ENCODE measurements at regions of chr2 and their contacts with region 1.

Region 1: GRCh38 chr2:55519938-55520885 is 694 bp downstream of the CFAP36 start:
- DNase-seq: peak in 4 of 9 donors; percentile 23 to 58 (median 26)
- ATAC-seq: peak; percentile 31
- H3K4me3 ChIP-seq: peak overlapping the region; percentile 80
- H3K4me3 Mint-ChIP-seq: peak overlapping the region; percentile 89 to 99 (median 98)
- H3K27ac ChIP-seq: peak overlapping the region; percentile 90
- H3K27ac Mint-ChIP-seq: peak overlapping the region; percentile 96 to 100 (median 100)
- H3K4me1 ChIP-seq: peaks cover 0 to 5% of the 10 kb centered on the region in 2 donors
- H3K4me1 Mint-ChIP-seq: peaks cover 5 to 28% (median 16%) of the 10 kb centered on the region in 7 donors
- H3K27me3 ChIP-seq: no peaks in the 10 kb centered on the region
- H3K27me3 Mint-ChIP-seq: no peaks in the 10 kb centered on the region

Region 2: DNA sequence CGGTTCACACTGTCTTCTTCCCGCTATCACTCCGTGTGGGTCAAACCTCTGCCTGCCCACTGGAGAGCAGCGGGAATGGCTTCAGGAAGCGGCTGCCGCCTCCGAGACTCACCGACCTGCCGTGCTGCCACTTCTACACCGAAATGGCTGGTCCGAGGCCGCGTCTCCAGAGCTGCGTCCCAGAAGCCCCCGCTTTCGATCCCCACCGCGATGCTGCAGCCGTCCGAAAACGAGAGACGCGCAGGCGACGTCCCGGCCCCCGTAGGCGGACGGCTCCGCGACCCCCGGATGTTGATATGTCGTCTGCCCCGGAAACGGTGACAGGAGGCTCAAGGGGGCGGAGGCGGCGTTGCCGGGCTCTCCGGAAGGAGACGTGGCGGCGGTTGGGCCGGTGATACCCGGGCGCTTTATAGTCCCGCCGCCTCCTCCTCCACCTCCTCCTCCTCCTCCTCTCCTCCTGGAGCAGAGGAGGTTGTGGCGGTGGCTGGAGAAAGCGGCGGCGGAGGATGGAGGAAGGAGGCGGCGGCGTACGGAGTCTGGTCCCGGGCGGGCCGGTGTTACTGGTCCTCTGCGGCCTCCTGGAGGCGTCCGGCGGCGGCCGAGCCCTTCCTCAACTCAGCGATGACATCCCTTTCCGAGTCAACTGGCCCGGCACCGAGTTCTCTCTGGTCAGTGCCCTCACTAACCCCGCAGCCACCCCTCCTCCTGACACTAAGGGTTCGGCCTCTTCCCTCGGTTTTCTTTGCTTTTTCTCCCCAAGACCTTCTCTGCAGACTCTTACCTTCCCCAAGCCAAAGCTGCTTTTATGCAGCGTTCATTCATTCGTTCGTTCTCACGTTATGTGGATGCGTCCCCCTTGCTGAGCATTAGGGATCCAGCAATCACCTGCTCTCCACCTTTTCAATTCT is 1733.3 kb before region 1 on chr2 and contains the starts of genes ASB3 and ERLEC1:
- CTCF ChIA-PET with region 1: no interaction called
- POLR2A ChIA-PET with region 1: no interaction called
- intact Hi-C with region 1: loop called in 1 of 2 experiments (anchors 1 kb)
- DNase-seq: peak; percentile 69 to 87 (median 83)
- ATAC-seq: peak; percentile 95
- H3K4me3 ChIP-seq: peak within 1 kb of the TSS; percentile 66
- H3K4me3 Mint-ChIP-seq: peak within 1 kb of the TSS; percentile 88 to 99 (median 98)
- H3K27ac ChIP-seq: peak within 1 kb of the TSS; percentile 82
- H3K27ac Mint-ChIP-seq: peak within 1 kb of the TSS; percentile 81 to 99 (median 96)
- H3K4me1 ChIP-seq: peaks cover 14 to 16% of the 10 kb centered on the region in 2 donors
- H3K4me1 Mint-ChIP-seq: peaks cover 37 to 79% (median 67%) of the 10 kb centered on the region in 7 donors
- H3K27me3 ChIP-seq: no peaks in the 10 kb centered on the region
- H3K27me3 Mint-ChIP-seq: no peaks in the 10 kb centered on the region
- total RNA-seq, gene ASB3: 24.9 to 43.2 (median 34.5) TPM
- total RNA-seq, gene ERLEC1: 13.3 to 30.1 (median 26.3) TPM

Region 3: DNA sequence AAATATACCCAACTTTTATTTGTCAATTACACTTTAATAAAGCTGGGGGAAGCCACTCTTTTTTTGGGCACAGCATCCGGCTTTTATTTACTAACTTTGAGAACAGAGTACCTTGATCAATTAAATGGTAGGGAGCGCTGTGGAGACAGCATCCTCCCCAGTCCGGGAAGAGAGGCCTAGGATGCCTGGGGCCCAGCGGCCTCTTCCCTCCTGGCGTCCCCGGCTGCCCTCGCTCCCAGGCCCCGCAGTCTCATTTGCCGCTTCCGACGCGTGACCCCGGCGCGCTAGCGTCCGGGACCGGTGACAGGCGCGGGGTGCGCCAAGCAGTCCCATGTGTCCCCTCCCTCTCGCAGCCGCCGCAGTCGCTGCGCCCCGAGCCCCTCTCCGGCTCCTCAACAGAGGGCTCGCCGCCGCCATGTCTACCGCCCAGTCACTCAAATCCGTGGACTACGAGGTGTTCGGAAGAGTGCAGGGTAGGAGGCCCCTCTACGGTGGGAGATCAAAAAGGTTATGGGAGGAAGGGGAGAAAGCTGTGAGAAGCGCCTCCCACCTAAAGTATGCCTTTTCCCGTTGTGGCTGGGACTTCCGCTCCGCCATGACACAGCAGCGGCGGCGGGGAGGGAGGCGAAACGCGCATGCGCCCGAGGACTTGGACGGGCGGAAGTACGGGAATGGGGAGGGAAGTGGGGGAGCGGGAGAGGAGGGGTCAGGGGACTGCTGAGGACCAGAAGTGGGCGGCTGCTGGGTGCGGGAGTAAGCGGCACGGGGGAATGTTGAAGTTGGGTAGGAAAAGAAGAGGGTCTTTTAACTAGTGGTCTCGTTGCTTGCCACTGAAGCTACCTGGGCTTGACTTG is 1404.7 kb before region 1 on chr2 and contains the start of gene ACYP2:
- CTCF ChIA-PET with region 1: no interaction called
- POLR2A ChIA-PET with region 1: no interaction called
- intact Hi-C with region 1: loop called in 1 of 2 experiments (anchors 1 kb)
- DNase-seq: peak; percentile 76 to 93 (median 89)
- ATAC-seq: peak; percentile 88
- H3K4me3 ChIP-seq: peak within 1 kb of the TSS; percentile 89
- H3K4me3 Mint-ChIP-seq: peak within 1 kb of the TSS; percentile 92 to 98 (median 97)
- H3K27ac ChIP-seq: peak within 1 kb of the TSS; percentile 93
- H3K27ac Mint-ChIP-seq: peak within 1 kb of the TSS; percentile 98 to 100 (median 99)
- H3K4me1 ChIP-seq: peaks cover 0 to 6% of the 10 kb centered on the region in 2 donors
- H3K4me1 Mint-ChIP-seq: peaks cover 10 to 31% (median 24%) of the 10 kb centered on the region in 7 donors
- H3K27me3 ChIP-seq: no peaks in the 10 kb centered on the region
- H3K27me3 Mint-ChIP-seq: peaks cover 0 to 5% (median 0%) of the 10 kb centered on the region in 5 donors
- total RNA-seq, gene ACYP2: 12.3 to 19.6 (median 15.6) TPM

Region 4: GRCh38 chr2:55268907-55269644 is 251.1 kb before region 1 on chr2 and contains the start of gene MTIF2:
- CTCF ChIA-PET with region 1: no interaction called
- POLR2A ChIA-PET with region 1: interaction called, 5 read pairs
- intact Hi-C with region 1: loop called in 1 of 2 experiments (anchors 1 kb)
- DNase-seq: peak; percentile 64 to 90 (median 75)
- ATAC-seq: peak; percentile 97
- H3K4me3 ChIP-seq: peak within 1 kb of the TSS; percentile 84
- H3K4me3 Mint-ChIP-seq: peak within 1 kb of the TSS; percentile 78 to 97 (median 94)
- H3K27ac ChIP-seq: peak within 1 kb of the TSS; percentile 79
- H3K27ac Mint-ChIP-seq: peak within 1 kb of the TSS; percentile 94 to 97 (median 96)
- H3K4me1 ChIP-seq: peaks cover 13 to 16% of the 10 kb centered on the region in 2 donors
- H3K4me1 Mint-ChIP-seq: peaks cover 15 to 35% (median 27%) of the 10 kb centered on the region in 7 donors
- H3K27me3 ChIP-seq: no peaks in the 10 kb centered on the region
- H3K27me3 Mint-ChIP-seq: peaks cover 0 to 5% (median 0%) of the 10 kb centered on the region in 5 donors
- total RNA-seq, gene MTIF2: 23.0 to 35.5 (median 28.0) TPM

Region 5: GRCh38 chr2:55530539-55531081 is 10.4 kb after region 1 on chr2:
- CTCF ChIA-PET with region 1: interaction called, 4 read pairs
- POLR2A ChIA-PET with region 1: interaction called, 62 read pairs
- intact Hi-C with region 1: loop called (anchors 1 kb)
- DNase-seq: peak in 7 of 9 donors; percentile 13 to 64 (median 43)
- ATAC-seq: peak; percentile 75
- H3K4me3 ChIP-seq: no peak overlapping the region
- H3K4me3 Mint-ChIP-seq: peak overlapping the region in 9 of 10 donors; percentile 10 to 66 (median 58)
- H3K27ac ChIP-seq: peak overlapping the region; percentile 67
- H3K27ac Mint-ChIP-seq: peak overlapping the region; percentile 85 to 97 (median 89)
- H3K4me1 ChIP-seq: peaks cover 7 to 22% of the 10 kb centered on the region in 2 donors
- H3K4me1 Mint-ChIP-seq: peaks cover 14 to 35% (median 24%) of the 10 kb centered on the region in 7 donors
- H3K27me3 ChIP-seq: no peaks in the 10 kb centered on the region
- H3K27me3 Mint-ChIP-seq: no peaks in the 10 kb centered on the region

Region 6: DNA sequence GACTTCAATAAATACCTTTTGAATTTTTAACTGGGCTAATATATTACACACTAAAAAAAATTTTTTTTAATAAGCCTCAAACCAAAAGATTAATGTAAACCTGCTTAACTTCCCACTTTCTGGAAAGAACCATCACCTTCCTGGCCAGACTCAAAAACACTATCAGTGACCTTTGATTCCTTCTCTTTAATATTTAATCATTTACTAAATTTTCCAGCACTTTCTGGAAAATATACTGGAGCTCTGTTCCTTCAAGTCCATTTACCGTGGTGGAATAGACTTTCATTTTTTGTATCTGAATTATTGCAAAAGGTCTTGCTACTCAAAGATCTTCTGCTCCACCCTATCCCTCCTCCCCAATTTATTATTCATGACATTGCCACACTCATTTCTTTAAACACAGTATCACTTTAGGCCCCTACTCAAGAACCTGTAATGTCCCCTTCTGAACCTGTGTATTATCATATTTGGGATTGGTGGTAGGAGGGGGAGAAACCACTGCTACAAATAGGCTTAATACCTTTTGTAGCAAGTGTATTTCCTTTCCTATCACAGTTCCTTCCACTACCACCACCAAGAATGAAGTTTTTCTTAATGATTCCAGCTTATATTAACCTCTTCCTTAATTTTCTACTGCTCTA is 89.8 kb after region 1 on chr2:
- CTCF ChIA-PET with region 1: no interaction called
- POLR2A ChIA-PET with region 1: interaction called, 24 read pairs
- intact Hi-C with region 1: no loop called
- DNase-seq: no peak
- ATAC-seq: no peak
- H3K4me3 ChIP-seq: no peak overlapping the region
- H3K4me3 Mint-ChIP-seq: peak overlapping the region in 8 of 10 donors; percentile 25 to 59 (median 42)
- H3K27ac ChIP-seq: peak overlapping the region; percentile 11
- H3K27ac Mint-ChIP-seq: peak overlapping the region in 8 of 9 donors; percentile 14 to 78 (median 54)
- H3K4me1 ChIP-seq: peaks cover 10 to 18% of the 10 kb centered on the region in 2 donors
- H3K4me1 Mint-ChIP-seq: peaks cover 32 to 80% (median 73%) of the 10 kb centered on the region in 7 donors
- H3K27me3 ChIP-seq: no peaks in the 10 kb centered on the region
- H3K27me3 Mint-ChIP-seq: no peaks in the 10 kb centered on the region

Measured in naive thymus-derived CD4-positive, alpha-beta T cell (primary cell).